ENCODE measurements at regions of chr14 and their contacts with region 1.

Region 1: DNA sequence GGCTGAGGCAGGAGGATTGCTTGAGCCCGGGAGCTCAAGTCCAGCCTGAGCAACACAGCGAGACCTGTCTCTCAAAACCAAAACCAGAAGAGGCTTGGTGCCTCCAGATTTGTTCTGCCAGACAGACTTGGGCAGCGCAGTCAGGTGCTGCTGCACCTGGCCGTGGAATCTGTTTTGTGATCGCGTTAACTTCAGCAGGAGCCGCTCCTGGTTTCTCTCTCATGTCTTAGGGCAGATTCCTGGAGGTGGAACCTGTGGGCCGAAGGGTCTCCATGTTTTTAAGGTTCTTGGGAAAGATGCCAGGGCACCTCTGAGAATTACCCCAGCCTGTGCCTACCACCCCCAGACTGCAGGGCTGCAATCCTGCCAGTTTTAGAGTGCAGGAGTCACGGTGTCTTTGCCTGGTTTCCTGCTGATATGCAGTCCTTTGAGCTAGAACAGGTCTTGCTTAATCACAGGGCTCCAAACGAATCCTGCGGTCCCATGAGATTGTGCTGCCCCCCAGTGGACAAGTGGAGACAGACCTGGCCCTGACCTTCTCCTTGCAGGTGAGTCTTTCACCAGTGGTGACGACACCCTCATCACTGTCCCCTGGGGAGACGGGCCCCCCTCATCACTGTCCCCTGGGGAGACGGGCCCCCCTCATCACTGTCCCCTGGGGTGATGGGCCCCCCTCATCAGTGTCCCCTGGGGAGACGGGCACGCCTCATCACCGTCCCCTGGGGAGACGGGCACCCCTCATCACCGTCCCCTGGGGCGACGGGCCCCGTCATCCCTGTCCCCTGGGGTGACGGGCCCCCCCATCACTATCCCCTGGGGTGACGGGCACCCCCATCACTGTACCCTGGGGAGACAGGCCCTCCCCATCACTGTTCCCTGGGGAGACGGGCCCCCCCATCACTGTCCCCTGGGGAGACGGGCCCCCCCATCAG is 37.6 kb downstream of the PACS2 start:
- DNase-seq: peak; percentile 80 to 85 (median 82)
- ATAC-seq: peak; percentile 81 to 91 (median 85)
- H3K4me3 ChIP-seq: no peak overlapping the region
- H3K27ac ChIP-seq: peak overlapping the region in 4 of 12 donors; percentile 22 to 59 (median 48)
- H3K4me1 ChIP-seq: peaks cover 0 to 8% (median 5%) of the 10 kb centered on the region in 12 donors
- H3K27me3 ChIP-seq: no peaks in the 10 kb centered on the region
- CTCF ChIP-seq: peak; percentile 73 to 90 (median 82)
- POLR2A ChIP-seq: no peak

Region 2: DNA sequence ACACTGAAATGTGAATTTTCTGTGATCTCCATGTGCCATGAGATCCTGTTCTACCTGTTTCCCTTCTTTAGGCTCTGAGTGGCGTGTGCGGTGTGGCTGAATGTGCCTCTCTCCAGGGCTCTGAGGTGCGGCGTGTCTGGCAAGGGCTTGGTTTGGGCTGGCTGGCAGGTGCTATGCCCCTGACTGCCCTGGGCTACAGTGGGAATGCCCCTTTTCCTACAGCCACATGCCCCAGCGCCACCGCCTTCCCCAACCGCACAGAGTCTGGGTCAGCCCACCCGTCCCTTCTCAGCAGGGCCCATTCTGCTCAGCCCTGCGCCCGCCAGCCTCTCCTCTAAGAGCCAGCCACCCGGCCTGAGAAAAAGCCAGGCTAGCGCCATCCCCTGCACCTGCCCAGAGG is 79.1 kb before region 1 on chr14:
- intact Hi-C with region 1: loop called in 2 of 10 experiments (anchors 5 to 10 kb)
- DNase-seq: no peak
- ATAC-seq: no peak
- H3K4me3 ChIP-seq: no peak overlapping the region
- H3K27ac ChIP-seq: no peak overlapping the region
- H3K4me1 ChIP-seq: peaks cover 0 to 20% (median 2%) of the 10 kb centered on the region in 12 donors
- H3K27me3 ChIP-seq: no peaks in the 10 kb centered on the region
- CTCF ChIP-seq: no peak
- POLR2A ChIP-seq: no peak

Region 3: DNA sequence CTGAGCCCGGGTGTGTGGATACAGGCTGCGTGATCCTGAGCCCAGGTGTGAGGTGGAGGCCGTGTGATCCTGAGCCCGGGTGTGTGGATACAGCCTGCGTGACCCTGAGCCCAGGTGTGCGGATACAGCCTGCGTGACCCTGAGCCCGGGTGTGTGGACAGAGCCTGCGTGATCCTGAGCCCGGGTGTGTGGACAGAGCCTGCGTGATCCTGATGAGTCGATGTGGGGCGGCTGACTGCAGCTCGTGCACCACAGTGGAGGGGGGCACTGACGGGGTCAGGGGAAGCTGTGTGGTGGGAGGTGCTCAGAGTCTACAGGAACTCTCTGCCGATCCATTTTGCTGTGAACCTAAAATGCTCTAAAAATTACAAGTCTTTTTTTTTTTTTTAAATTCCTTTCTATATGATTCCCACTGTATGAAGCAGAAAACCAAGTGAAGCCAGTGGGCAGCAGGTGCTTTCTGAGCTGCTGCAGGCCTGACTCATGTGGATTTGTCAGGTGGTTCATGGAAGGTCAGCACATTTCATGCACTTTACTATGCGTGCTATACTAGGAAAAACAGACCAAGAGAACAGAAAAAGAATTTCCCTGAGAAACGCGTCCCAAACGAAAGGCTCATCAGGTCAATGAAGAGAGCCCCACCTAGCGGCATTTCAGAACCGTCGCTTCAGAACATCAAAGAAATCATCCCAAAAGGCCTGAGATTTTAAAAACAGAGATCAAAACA is 70.7 kb before region 1 on chr14:
- intact Hi-C with region 1: loop called in 2 of 10 experiments (anchors 10 kb)
- DNase-seq: no peak
- ATAC-seq: peak in 1 of 4 donors; percentile 22
- H3K4me3 ChIP-seq: no peak overlapping the region
- H3K27ac ChIP-seq: no peak overlapping the region
- H3K4me1 ChIP-seq: peaks cover 0 to 16% (median 10%) of the 10 kb centered on the region in 12 donors
- H3K27me3 ChIP-seq: no peaks in the 10 kb centered on the region
- CTCF ChIP-seq: peak; percentile 40 to 70 (median 58)
- POLR2A ChIP-seq: no peak

Region 4: DNA sequence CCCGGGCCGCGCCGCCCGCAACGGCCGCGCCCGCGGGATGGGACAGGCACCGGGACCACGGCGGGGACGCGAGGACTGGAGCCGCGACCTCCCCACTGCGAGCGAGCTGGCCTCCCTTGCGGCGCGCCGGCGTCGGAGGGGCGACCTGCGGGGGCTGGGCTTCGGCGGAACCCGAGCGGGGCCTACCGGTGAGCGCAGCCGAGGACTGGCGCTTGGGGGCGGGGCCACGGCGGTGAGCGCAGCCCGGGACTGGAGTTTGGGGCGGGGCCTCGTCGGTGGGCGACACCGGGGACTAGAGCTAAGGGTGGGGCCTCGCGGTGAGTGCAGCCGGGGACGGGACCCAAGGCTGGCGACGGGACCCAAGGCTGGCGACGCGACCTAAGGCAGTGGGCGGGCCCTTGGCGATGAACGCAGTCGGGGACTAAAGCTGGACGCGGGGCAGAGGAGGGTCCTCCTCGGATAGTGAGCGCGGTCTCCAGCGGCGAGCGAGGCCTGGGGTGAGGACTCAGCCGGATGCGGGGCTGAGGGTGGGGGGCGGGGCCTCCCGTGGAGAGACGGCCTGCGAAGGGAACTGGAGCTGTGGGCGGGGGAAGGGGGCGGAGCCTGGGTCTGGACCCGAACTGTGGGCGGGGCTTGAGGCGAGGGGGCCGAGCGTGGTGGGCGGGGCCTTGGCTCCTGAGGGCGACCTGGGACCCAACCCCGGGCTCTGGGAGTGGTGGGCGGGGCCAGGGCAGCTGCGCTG is 51.2 kb before region 1 on chr14 and contains the start of gene BRF1:
- intact Hi-C with region 1: loop called in 2 of 10 experiments (anchors 5 kb)
- DNase-seq: peak; percentile 98 to 100 (median 98)
- ATAC-seq: peak; percentile 94 to 98 (median 96)
- H3K4me3 ChIP-seq: peak within 1 kb of the TSS; percentile 61 to 98 (median 88)
- H3K27ac ChIP-seq: peak within 1 kb of the TSS; percentile 85 to 99 (median 94)
- H3K4me1 ChIP-seq: peaks cover 0 to 42% (median 16%) of the 10 kb centered on the region in 12 donors
- H3K27me3 ChIP-seq: no peaks in the 10 kb centered on the region
- CTCF ChIP-seq: no peak
- POLR2A ChIP-seq: peak in 1 of 2 donors; percentile 72
- total RNA-seq, gene BRF1: 13.3 to 25.3 (median 18.7) TPM

Region 5: GRCh38 chr14:105314287-105315200 is 37.6 kb before region 1 on chr14 and contains the start of gene PACS2:
- intact Hi-C with region 1: loop called in 3 of 10 experiments (anchors 5 kb)
- DNase-seq: peak; percentile 73 to 89 (median 82)
- ATAC-seq: peak; percentile 59 to 90 (median 85)
- H3K4me3 ChIP-seq: peak within 1 kb of the TSS; percentile 67 to 97 (median 80)
- H3K27ac ChIP-seq: peak within 1 kb of the TSS; percentile 54 to 99 (median 91)
- H3K4me1 ChIP-seq: peaks cover 0 to 41% (median 34%) of the 10 kb centered on the region in 12 donors
- H3K27me3 ChIP-seq: no peaks in the 10 kb centered on the region
- CTCF ChIP-seq: no peak
- POLR2A ChIP-seq: peak in 1 of 2 donors; percentile 33
- total RNA-seq, gene PACS2: 47.3 to 90.3 (median 60.8) TPM

Region 6: GRCh38 chr14:105622322-105622955 is 270.3 kb after region 1 on chr14:
- intact Hi-C with region 1: no loop called
- DNase-seq: peak in 2 of 5 donors; percentile 2 to 52
- ATAC-seq: peak in 2 of 4 donors; percentile 29 to 68
- H3K4me3 ChIP-seq: no peak overlapping the region
- H3K27ac ChIP-seq: no peak overlapping the region
- H3K4me1 ChIP-seq: no peaks in the 10 kb centered on the region
- H3K27me3 ChIP-seq: peaks cover 0 to 5% (median 0%) of the 10 kb centered on the region in 9 donors
- CTCF ChIP-seq: no peak
- POLR2A ChIP-seq: no peak